Spleen (tissue), 13 donors: ENCODE measurements at regions of chr1 and their contacts with region 1.

Region 1: GRCh38 chr1:109532365-109533136 is 7.1 kb upstream of the GPR61 start:
- DNase-seq: peak; percentile 96
- H3K4me3 ChIP-seq: peak overlapping the region in 6 of 8 donors; percentile 7 to 58 (median 24)
- H3K27ac ChIP-seq: peak overlapping the region in 7 of 8 donors; percentile 36 to 81 (median 71)
- H3K4me1 ChIP-seq: peaks cover 5 to 41% (median 22%) of the 10 kb centered on the region in 6 donors
- H3K27me3 ChIP-seq: no peaks in the 10 kb centered on the region
- CTCF ChIP-seq: peak; percentile 89 to 98 (median 97)
- POLR2A ChIP-seq: no peak

Region 2: GRCh38 chr1:108559215-108560186 is 973.0 kb before region 1 on chr1 and contains the start of gene EEIG2:
- intact Hi-C with region 1: no loop called
- DNase-seq: peak; percentile 98
- H3K4me3 ChIP-seq: peak within 1 kb of the TSS; percentile 56 to 84 (median 66)
- H3K27ac ChIP-seq: peak within 1 kb of the TSS; percentile 68 to 86 (median 82)
- H3K4me1 ChIP-seq: peaks cover 21 to 80% (median 56%) of the 10 kb centered on the region in 6 donors
- H3K27me3 ChIP-seq: no peaks in the 10 kb centered on the region
- CTCF ChIP-seq: peak; percentile 39 to 98 (median 94)
- POLR2A ChIP-seq: no peak
- total RNA-seq, gene EEIG2: 17.1 to 21.1 (median 17.8) TPM

Region 3: DNA sequence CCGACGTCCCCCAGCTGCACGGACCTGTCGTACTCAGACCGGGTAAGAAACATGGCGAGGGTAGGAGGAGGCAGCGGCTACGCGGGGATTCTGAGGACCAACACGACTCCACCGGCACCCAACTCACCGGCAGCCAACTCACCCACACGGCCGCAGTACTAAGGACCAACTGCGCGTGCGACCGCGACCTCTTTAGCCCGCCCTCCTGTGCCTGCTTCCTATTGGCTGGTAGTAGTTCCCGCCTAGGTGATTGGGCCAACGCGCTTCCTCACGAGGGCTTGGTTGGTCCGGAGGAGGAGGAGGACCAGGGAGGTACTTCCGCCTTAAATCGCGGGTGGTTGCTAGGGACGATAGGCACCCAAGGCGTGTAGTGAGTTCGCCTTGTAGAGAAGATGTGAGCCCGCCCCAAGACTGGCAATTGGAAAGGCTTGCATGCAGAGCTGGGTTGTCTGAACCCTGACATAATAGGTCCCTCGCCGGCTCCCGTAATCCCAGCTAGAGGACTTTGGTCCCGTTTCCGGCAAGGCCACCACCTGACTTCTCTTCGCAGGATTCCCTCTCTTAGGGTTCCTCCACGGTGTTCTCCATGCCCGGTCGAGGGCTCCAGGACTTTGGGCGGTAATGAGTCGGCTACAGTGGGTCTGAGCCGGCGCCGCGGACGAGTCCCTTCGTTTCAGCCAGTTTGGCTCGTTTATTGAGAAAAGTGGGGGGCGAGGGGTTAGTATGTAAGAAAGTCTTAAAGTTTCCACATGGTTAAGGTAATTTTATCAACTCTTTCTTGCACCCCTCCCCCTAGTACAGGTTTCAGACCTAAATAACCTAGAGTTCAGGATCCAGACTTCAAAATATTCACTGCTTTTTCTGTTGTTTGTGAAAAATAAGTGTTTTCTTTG is 106.0 kb before region 1 on chr1 and contains the start of gene PSMA5:
- intact Hi-C with region 1: loop called (anchors 10 kb)
- DNase-seq: peak; percentile 97
- H3K4me3 ChIP-seq: peak within 1 kb of the TSS; percentile 87 to 99 (median 92)
- H3K27ac ChIP-seq: peak within 1 kb of the TSS; percentile 85 to 96 (median 90)
- H3K4me1 ChIP-seq: peaks cover 13 to 56% (median 47%) of the 10 kb centered on the region in 6 donors
- H3K27me3 ChIP-seq: no peaks in the 10 kb centered on the region
- CTCF ChIP-seq: peak in 3 of 11 experiments; percentile 15 to 39 (median 37)
- POLR2A ChIP-seq: peak in 2 of 3 donors; percentile 57 to 79
- total RNA-seq, gene PSMA5: 29.9 to 87.0 (median 62.2) TPM

Region 4: DNA sequence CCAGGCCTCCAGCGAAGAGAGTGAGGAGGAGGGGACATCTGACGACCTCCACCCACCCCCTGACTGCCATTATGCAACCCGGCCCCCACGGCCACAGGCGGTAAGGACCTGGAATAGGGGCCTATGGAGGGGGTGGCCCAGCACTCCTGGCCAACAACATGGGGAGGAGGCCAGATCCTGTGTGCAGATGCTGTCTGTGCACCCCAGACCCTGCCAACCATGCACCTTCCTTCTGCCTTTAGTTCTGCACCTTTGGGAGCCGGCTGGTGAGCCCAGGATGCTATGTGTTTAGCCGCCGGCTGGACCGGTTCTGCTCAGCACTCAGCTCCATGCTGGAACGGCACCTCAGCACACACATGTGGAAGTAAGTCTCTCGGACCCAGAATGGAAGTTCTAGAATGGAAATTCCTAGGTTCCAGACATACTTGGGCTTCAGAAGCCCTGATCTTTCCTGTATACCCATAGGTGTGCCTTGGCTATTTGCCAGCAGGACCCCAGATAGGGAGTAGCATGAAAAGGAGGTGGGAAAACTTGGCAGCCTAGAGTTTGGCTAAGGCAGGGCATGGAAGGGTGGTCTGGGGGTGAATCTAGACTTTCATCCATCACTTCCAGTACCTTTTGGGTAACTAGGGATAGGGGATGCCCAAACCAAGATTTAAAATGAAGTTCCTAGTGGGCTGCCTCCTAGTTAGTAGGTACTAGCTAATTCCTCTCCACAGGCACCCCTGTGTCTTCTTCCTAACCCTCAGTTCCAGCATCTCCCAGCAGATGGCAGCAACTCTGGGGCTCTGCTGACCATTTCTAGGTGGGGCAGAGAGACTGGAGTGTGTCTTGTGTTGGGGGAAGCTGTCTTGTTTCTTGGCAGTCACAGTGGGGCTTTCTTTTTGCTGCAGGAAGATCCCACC is 42.3 kb before region 1 on chr1:
- intact Hi-C with region 1: loop called (anchors 2 kb)
- DNase-seq: peak; percentile 84
- H3K4me3 ChIP-seq: no peak overlapping the region
- H3K27ac ChIP-seq: peak overlapping the region in 6 of 8 donors; percentile 14 to 64 (median 50)
- H3K4me1 ChIP-seq: peaks cover 14 to 84% (median 50%) of the 10 kb centered on the region in 6 donors
- H3K27me3 ChIP-seq: no peaks in the 10 kb centered on the region
- CTCF ChIP-seq: peak; percentile 64 to 92 (median 84)
- POLR2A ChIP-seq: no peak

Region 5: GRCh38 chr1:109923131-109923945 is 390.8 kb after region 1 on chr1:
- intact Hi-C with region 1: no loop called
- DNase-seq: no peak
- H3K4me3 ChIP-seq: no peak overlapping the region
- H3K27ac ChIP-seq: peak overlapping the region in 6 of 8 donors; percentile 20 to 85 (median 62)
- H3K4me1 ChIP-seq: peaks cover 2 to 86% (median 36%) of the 10 kb centered on the region in 6 donors
- H3K27me3 ChIP-seq: no peaks in the 10 kb centered on the region
- CTCF ChIP-seq: peak in 8 of 11 experiments; percentile 16 to 58 (median 46)
- POLR2A ChIP-seq: no peak